ENCODE measurements at regions of chr22 and their contacts with region 1.

Region 1: GRCh38 chr22:28992565-28993356 is 68.9 kb downstream of the C22orf31 start:
- DNase-seq: no peak
- H3K4me3 ChIP-seq: no peak overlapping the region
- H3K27ac ChIP-seq: no peak overlapping the region
- H3K4me1 ChIP-seq: no peaks in the 10 kb centered on the region
- H3K27me3 ChIP-seq: no peaks in the 10 kb centered on the region
- CTCF ChIP-seq: no peak

Region 2: DNA sequence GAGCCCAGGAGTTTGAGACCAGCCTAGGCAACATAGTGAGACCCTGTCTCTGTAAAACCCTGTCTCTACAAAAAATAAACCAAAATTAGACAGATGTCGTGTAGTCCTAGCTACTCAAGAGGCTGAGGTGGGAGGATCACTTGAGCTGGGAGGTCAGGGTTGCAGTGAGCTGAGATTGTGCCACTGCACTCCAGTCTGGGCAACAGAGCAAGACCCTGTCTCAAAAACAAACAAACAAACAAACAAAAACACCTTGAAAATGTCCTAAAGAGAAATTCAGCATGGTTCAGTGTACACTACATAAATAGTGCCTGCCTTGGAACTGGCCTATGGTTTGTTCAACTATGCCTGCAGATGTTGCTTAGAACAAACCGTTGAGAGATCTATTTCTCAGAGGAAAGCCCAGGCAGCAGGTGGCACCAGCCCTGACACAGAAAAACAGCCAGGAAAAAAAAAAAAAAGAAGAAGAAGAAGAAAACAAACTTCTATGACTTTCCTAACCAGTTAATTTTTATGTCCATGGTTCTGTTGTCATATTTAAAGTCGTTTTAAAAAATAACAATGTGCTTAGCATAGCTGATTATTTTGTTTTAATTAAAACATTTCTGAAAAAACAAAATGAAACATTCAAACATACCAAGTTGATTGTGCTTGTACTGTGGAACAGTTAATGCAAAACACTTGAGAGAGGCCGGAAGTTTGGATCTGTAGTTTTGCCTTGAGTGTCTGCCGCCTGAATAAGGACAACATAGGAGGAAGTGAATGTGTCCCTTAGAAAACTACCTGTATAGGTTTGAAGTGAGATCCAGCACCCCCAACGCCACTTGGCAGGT is 85.5 kb after region 1 on chr22:
- CTCF ChIA-PET with region 1: interaction called, 10 read pairs
- POLR2A ChIA-PET with region 1: no interaction called
- intact Hi-C with region 1: no loop called
- DNase-seq: no peak
- H3K4me3 ChIP-seq: no peak overlapping the region
- H3K27ac ChIP-seq: peak overlapping the region; percentile 50
- H3K4me1 ChIP-seq: peaks cover 47% of the 10 kb centered on the region
- H3K27me3 ChIP-seq: no peaks in the 10 kb centered on the region
- CTCF ChIP-seq: peak; percentile 37; the same call in 1 of the 2 replicates